ENCODE measurements at regions of chr16 and their contacts with region 1.

Region 1: GRCh38 chr16:79770244-79771064 is 169.9 kb upstream of the MAF start:
- DNase-seq: peak; percentile 97

Region 2: GRCh38 chr16:79664407-79664806 is 106.0 kb before region 1 on chr16:
- intact Hi-C with region 1: no loop called
- DNase-seq: no peak

Region 3: GRCh38 chr16:79721270-79721669 is 49.2 kb before region 1 on chr16:
- intact Hi-C with region 1: loop called in 1 of 2 experiments (anchors 1 kb)
- DNase-seq: no peak

Region 4: GRCh38 chr16:79810449-79811189 is 40.2 kb after region 1 on chr16:
- intact Hi-C with region 1: no loop called
- DNase-seq: no peak

Region 5: DNA sequence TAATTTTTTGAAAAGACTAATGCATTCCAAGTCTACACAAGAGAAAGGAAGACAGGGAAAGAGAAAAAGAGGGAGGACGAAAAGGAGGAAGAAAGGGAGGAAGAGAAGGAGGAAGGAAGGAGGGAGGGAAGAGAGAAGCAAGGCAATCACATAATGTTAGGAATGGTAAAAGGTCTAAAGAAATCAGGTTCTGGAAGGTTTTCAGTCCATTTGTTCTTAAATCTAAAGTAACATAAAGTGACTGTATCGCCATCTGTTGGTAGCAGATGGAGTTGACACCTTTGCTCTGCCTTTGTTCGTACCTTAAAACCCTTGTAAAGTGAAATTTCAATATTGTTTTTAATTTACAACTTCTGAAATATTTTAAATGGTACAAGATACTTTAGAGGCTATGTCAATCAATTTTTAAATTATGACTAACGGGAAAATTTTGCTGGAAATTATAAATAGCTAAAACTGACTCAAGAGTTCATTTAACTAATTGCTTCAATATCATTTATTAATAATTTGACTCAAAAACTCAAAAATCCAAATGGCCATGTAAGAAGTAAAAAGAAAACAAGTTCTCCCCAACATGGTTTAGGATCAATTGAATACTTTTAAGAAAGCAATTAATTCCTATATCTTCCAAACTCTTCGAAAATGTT is 1054.4 kb after region 1 on chr16:
- intact Hi-C with region 1: loop called in 1 of 2 experiments (anchors 10 kb)
- DNase-seq: no peak